ENCODE measurements at regions of chr13 and their contacts with region 1.

Region 1: GRCh38 chr13:30465585-30466357 is at the start of gene HMGB1:
- DNase-seq: peak; percentile 98 to 99
- H3K4me3 ChIP-seq: peak within 1 kb of the TSS; percentile 52
- H3K4me3 Mint-ChIP-seq: peak within 1 kb of the TSS; percentile 98
- H3K27ac Mint-ChIP-seq: peak within 1 kb of the TSS; percentile 100
- H3K4me1 ChIP-seq: peaks cover 12% of the 10 kb centered on the region
- H3K4me1 Mint-ChIP-seq: no peaks in the 10 kb centered on the region
- H3K27me3 ChIP-seq: no peaks in the 10 kb centered on the region
- H3K27me3 Mint-ChIP-seq: peaks cover 2% of the 10 kb centered on the region
- CTCF ChIP-seq: no peak
- total RNA-seq, gene HMGB1: 569 and 598 TPM in 2 replicates

Region 2: DNA sequence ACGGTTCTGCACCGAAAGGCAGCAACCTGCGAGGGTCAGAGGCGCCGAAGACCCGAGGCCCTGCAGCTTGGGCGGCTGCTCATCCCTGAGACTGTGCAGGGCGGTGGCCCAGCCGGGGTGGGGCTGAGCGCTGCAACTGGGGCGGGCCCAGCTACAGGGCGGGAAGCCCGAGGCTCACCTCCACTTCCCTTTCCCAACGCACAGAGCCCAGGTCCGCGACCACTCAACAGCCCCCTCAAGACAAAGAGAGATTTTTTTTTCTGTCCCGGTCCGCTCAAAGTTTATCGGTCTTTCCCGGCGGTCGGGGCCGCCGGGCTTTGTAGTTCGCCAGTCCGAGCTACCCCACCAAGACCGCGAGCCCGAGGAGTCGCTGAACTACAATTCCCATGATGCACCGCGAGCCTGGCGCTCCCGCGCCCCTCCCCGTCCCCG is 159.0 kb before region 1 on chr13:
- CTCF ChIA-PET with region 1: no interaction called
- POLR2A ChIA-PET with region 1: no interaction called
- intact Hi-C with region 1: loop called (anchors 10 kb)
- DNase-seq: peak; percentile 95
- H3K4me3 ChIP-seq: peak overlapping the region; percentile 82
- H3K4me3 Mint-ChIP-seq: peak overlapping the region; percentile 77
- H3K27ac Mint-ChIP-seq: peak overlapping the region; percentile 51
- H3K4me1 ChIP-seq: 0 out of 2 replicates have a peak, but pooled peaks cover 5% of the 10 kb centered on the region
- H3K4me1 Mint-ChIP-seq: no peaks in the 10 kb centered on the region
- H3K27me3 ChIP-seq: no peaks in the 10 kb centered on the region
- H3K27me3 Mint-ChIP-seq: peaks cover 6% of the 10 kb centered on the region
- CTCF ChIP-seq: no peak

Region 3: GRCh38 chr13:30319655-30320054 is 146.1 kb before region 1 on chr13:
- CTCF ChIA-PET with region 1: no interaction called
- POLR2A ChIA-PET with region 1: no interaction called
- intact Hi-C with region 1: no loop called
- DNase-seq: no peak
- H3K4me3 ChIP-seq: no peak overlapping the region
- H3K4me3 Mint-ChIP-seq: no peak overlapping the region
- H3K27ac Mint-ChIP-seq: no peak overlapping the region
- H3K4me1 ChIP-seq: peaks cover 10% of the 10 kb centered on the region
- H3K4me1 Mint-ChIP-seq: peaks cover 8% of the 10 kb centered on the region
- H3K27me3 ChIP-seq: no peaks in the 10 kb centered on the region
- H3K27me3 Mint-ChIP-seq: peaks cover 4% of the 10 kb centered on the region
- CTCF ChIP-seq: no peak

Region 4: DNA sequence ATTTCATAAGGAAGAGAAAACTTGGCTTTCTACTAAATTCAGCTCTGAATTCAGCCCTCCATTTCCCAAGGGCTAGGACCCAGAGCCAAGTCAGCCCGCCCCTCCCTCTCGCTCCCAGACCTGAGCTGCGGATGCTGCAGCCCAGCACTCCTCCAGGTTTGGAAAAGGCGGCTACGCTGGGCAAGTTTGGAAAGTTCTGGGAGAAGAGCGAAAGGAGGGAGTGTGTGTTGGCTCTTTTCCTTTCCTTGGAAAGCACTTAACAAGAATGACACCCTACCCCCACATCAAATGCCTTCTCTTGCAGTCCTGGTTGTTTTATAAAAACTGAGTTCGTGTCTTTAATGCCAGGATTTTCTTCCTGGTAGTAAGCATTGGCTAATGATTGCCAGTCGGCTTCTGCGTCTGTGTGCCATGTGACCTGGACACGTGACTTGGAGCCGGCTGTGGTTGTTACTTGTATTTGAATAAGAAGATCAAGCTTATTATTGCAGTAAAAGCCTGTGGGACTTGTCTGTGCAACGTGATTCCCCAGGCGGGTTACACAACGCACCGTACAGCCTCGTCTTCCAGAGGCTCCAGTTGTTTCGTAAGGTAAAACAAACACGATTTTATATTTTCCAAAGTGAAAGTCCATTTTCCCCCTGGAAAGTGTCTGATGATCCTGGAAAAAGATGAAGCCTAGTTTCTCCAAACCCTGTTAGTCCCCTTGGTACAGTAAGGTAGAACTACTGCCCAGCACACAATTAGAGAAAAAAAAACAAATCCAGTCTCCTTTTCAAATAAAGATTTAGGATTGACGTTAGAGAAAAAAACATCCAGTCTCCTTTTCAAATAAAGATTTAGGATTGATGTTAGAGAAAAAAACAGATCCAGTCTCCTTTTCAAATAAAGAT is 70.3 kb before region 1 on chr13:
- CTCF ChIA-PET with region 1: no interaction called
- POLR2A ChIA-PET with region 1: no interaction called
- intact Hi-C with region 1: loop called (anchors 1 kb)
- DNase-seq: peak; percentile 89 to 94
- H3K4me3 ChIP-seq: peak overlapping the region; percentile 45
- H3K4me3 Mint-ChIP-seq: peak overlapping the region; percentile 93
- H3K27ac Mint-ChIP-seq: peak overlapping the region; percentile 92
- H3K4me1 ChIP-seq: peaks cover 10% of the 10 kb centered on the region
- H3K4me1 Mint-ChIP-seq: no peaks in the 10 kb centered on the region
- H3K27me3 ChIP-seq: no peaks in the 10 kb centered on the region
- H3K27me3 Mint-ChIP-seq: no peaks in the 10 kb centered on the region
- CTCF ChIP-seq: no peak

Region 5: DNA sequence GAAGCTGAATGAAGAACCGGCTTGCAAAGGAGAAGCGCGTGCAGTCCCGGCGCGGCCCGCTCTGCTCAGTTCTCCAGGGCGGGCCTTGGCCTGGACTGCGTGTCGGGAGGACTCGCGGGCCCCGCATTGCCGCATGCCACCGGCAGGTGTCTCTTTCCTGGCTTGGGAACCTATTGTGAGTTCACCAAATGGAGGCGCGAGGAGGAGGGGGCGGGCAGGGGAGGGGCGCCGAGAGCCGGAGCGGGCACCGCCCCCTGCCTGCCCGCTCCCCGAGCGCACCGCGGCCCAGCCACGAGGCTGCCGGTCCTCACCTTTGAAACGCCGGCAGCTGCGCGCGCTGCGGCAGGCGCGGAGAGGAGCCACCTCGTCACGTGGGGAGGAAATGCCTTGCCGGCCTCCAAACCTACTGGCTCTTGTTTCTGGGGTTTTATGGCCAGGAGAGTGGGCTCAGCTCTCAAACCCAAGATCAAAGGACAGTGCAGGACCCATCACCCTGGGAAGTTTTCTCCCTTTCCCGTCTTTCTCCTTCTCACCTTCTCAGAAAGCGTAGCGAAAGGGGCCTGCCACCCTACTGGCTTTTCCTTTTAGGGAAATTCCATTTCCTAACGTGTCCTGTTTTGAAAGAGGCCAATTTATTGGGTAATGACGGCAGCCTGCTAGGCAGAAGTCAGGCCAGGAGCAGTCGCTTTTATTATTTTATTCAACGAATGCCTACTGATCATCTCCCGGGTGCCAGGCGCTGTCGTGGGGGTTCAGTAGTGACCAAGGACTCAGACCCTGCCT is 57.3 kb before region 1 on chr13:
- CTCF ChIA-PET with region 1: no interaction called
- POLR2A ChIA-PET with region 1: no interaction called
- intact Hi-C with region 1: no loop called
- DNase-seq: peak; percentile 95 to 96
- H3K4me3 ChIP-seq: peak overlapping the region; percentile 19
- H3K4me3 Mint-ChIP-seq: peak overlapping the region; percentile 62
- H3K27ac Mint-ChIP-seq: peak overlapping the region; percentile 46
- H3K4me1 ChIP-seq: 0 out of 2 replicates have a peak, but pooled peaks cover 5% of the 10 kb centered on the region
- H3K4me1 Mint-ChIP-seq: no peaks in the 10 kb centered on the region
- H3K27me3 ChIP-seq: no peaks in the 10 kb centered on the region
- H3K27me3 Mint-ChIP-seq: no peaks in the 10 kb centered on the region
- CTCF ChIP-seq: peak; percentile 76 to 82

Region 6: GRCh38 chr13:30422054-30422839 is 43.5 kb before region 1 on chr13 and contains the start of gene UBE2L5:
- CTCF ChIA-PET with region 1: no interaction called
- POLR2A ChIA-PET with region 1: interaction called, 3 read pairs
- intact Hi-C with region 1: loop called (anchors 5 kb)
- DNase-seq: peak; percentile 88
- H3K4me3 ChIP-seq: peak within 1 kb of the TSS; percentile 58
- H3K4me3 Mint-ChIP-seq: peak within 1 kb of the TSS; percentile 72
- H3K27ac Mint-ChIP-seq: peak within 1 kb of the TSS; percentile 16
- H3K4me1 ChIP-seq: peaks cover 7% of the 10 kb centered on the region; the same call in 1 of the 2 replicates
- H3K4me1 Mint-ChIP-seq: peaks cover 8% of the 10 kb centered on the region
- H3K27me3 ChIP-seq: no peaks in the 10 kb centered on the region
- H3K27me3 Mint-ChIP-seq: no peaks in the 10 kb centered on the region
- CTCF ChIP-seq: no peak
- total RNA-seq, gene UBE2L5: not detected in 2 replicates

Region 7: DNA sequence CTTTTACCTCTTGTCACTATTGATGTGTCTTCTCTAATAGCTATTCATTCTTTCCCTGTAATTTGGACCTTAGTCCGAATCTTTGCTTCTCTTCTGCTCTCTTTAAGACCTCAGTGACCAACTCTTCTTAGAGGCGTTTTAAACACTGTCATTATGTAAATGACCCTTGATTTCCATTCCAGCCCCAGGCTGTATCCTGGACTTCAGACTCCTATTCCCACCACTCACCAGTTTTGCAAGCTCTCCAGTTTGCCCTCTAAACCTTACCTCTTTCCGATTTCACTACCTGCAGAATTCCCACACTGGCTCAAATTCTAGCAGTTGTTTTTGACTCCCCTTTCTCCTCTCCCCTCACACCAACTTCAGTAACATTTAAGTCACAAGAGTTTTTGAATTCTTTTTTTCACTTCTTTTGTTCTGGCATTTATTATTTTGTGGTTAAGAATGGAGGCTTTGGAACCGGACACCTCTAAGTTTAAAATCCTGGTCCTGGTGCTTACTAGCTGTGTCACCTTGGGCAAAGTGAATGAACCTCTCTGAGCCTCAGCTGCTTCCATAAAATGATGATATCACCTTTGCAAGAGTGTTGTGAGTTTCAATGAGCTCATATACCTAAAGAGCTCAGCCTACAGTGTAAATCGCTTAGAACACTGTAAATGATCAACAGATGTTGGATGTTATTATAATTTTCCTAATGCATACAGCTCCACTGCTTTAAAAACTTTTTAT is 13.5 kb after region 1 on chr13:
- CTCF ChIA-PET with region 1: no interaction called
- POLR2A ChIA-PET with region 1: interaction called, 7 read pairs
- intact Hi-C with region 1: loop called (anchors 1 kb)
- DNase-seq: no peak
- H3K4me3 ChIP-seq: no peak overlapping the region
- H3K4me3 Mint-ChIP-seq: peak overlapping the region; percentile 16
- H3K27ac Mint-ChIP-seq: peak overlapping the region; percentile 14
- H3K4me1 ChIP-seq: peaks cover 18% of the 10 kb centered on the region
- H3K4me1 Mint-ChIP-seq: peaks cover 23% of the 10 kb centered on the region
- H3K27me3 ChIP-seq: no peaks in the 10 kb centered on the region
- H3K27me3 Mint-ChIP-seq: no peaks in the 10 kb centered on the region
- CTCF ChIP-seq: no peak

Region 8: DNA sequence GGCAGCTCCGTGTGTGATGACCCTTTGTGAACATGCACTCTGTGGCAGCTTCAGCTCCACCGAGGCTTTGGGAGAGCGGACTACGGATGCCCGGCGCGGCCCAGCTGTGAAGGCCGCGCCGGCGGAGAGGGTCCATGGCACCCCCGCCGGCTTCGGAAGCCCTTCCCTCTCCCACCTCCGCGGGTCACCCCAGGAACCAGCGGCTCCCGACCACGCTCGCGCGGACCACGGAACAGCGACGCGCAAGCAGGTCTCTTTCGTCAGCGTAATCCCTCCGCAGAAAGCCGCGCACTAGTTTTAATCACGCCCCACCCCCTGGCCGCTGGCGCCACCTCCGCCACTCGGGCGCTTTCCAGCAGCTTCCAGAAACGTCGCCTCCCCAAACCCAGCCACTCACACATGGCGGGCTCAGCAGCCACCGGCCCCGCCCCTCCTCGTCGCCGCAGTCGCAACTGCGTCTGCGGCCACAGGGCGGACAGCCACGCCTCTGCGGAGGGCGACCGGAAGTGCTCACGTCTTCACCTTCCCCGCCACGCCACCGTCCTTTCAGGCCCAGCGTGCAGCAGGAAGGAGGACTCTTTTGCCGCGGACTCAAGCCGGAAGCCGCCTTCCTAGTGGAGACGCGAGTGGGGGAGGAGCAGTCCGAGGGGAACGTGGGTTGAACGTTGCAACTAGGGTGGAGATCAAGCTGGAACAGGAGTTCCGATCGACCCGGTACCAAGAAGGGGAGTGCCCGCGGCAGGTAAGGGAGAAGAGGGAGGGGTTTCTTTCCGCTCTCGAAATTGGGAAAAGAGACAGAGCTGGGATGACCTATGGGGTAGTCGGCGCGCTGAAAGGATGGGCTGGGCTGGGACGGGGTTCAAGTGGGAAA is 151.8 kb after region 1 on chr13 and contains the start of gene USPL1:
- CTCF ChIA-PET with region 1: interaction called, 3 read pairs
- POLR2A ChIA-PET with region 1: interaction called, 3 read pairs
- intact Hi-C with region 1: loop called (anchors 2 kb)
- DNase-seq: peak; percentile 99
- H3K4me3 ChIP-seq: peak within 1 kb of the TSS; percentile 61
- H3K4me3 Mint-ChIP-seq: no peak within 1 kb of the TSS
- H3K27ac Mint-ChIP-seq: no peak within 1 kb of the TSS
- H3K4me1 ChIP-seq: 0 out of 2 replicates have a peak, but pooled peaks cover 8% of the 10 kb centered on the region
- H3K4me1 Mint-ChIP-seq: no peaks in the 10 kb centered on the region
- H3K27me3 ChIP-seq: no peaks in the 10 kb centered on the region
- H3K27me3 Mint-ChIP-seq: no peaks in the 10 kb centered on the region
- CTCF ChIP-seq: no peak
- total RNA-seq, gene USPL1: 23.4 and 26.7 TPM in 2 replicates

Region 9: GRCh38 chr13:31154939-31155338 is 689.2 kb after region 1 on chr13:
- CTCF ChIA-PET with region 1: no interaction called
- POLR2A ChIA-PET with region 1: no interaction called
- intact Hi-C with region 1: no loop called
- DNase-seq: no peak
- H3K4me3 ChIP-seq: no peak overlapping the region
- H3K4me3 Mint-ChIP-seq: no peak overlapping the region
- H3K27ac Mint-ChIP-seq: no peak overlapping the region
- H3K4me1 ChIP-seq: peaks cover 10% of the 10 kb centered on the region; the same call in 1 of the 2 replicates
- H3K4me1 Mint-ChIP-seq: peaks cover 19% of the 10 kb centered on the region
- H3K27me3 ChIP-seq: no peaks in the 10 kb centered on the region
- H3K27me3 Mint-ChIP-seq: no peaks in the 10 kb centered on the region
- CTCF ChIP-seq: no peak